Activated CD4-positive, alpha-beta memory T cell treated with anti-CD3 and anti-CD28 coated beads for 36 hours (primary cell): ENCODE measurements at regions of chr11 and their contacts with region 1.

Region 1: GRCh38 chr11:76734456-76735420 is 48.4 kb upstream of the TSKU start:
- DNase-seq: no peak
- H3K4me3 Mint-ChIP-seq: no peak overlapping the region
- H3K27ac Mint-ChIP-seq: no peak overlapping the region
- H3K4me1 Mint-ChIP-seq: no peaks in the 10 kb centered on the region
- H3K27me3 Mint-ChIP-seq: peaks cover 2% of the 10 kb centered on the region

Region 2: GRCh38 chr11:76799066-76799804 is 64.5 kb after region 1 on chr11:
- CTCF ChIA-PET with region 1: interaction called, 119 read pairs
- POLR2A ChIA-PET with region 1: interaction called, 4 read pairs
- intact Hi-C with region 1: loop called (anchors 1 kb)
- DNase-seq: peak; percentile 84
- H3K4me3 Mint-ChIP-seq: no peak overlapping the region
- H3K27ac Mint-ChIP-seq: no peak overlapping the region
- H3K4me1 Mint-ChIP-seq: peaks cover 17% of the 10 kb centered on the region
- H3K27me3 Mint-ChIP-seq: peaks cover 2% of the 10 kb centered on the region